A673 (cell line): ENCODE measurements at regions of chr2 and their contacts with region 1.

Region 1: DNA sequence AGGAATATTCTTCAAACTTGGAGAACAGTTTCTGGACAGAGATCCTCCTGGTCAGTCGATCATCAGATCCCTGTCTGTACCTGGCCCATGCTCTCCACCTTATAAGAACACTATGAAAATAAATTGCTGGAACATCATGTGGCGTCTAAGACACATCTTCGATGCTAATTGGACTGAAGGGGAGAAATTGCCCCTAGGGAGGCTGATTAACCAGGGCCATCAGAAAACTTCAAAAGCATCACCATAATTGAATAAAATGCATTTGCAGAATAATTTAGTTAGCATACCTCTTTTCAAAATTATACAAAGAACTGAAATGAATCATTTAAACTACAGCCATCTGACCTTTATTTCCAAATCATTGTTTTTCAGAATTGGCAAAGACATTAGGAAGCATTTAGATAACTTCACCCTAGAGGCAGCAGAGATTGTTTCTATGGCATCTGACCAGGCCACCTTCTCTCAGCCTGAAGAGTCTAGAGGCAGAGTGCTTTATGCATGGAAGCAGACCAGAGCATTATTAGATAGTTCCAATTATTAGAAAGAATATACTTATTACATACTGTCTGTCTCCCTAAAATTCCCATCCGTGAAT is 48.9 kb upstream of the CNTNAP5 start:
- DNase-seq: no peak
- H3K4me3 ChIP-seq: no peak overlapping the region
- H3K27ac ChIP-seq: no peak overlapping the region
- H3K4me1 ChIP-seq: no peaks in the 10 kb centered on the region
- H3K27me3 ChIP-seq: no peaks in the 10 kb centered on the region
- CTCF ChIP-seq: no peak

Region 2: GRCh38 chr2:125254010-125254409 is 1277.9 kb after region 1 on chr2:
- CTCF ChIA-PET with region 1: interaction called, 11 read pairs
- POLR2A ChIA-PET with region 1: no interaction called
- intact Hi-C with region 1: no loop called
- DNase-seq: no peak
- H3K4me3 ChIP-seq: no peak overlapping the region
- H3K27ac ChIP-seq: no peak overlapping the region
- H3K4me1 ChIP-seq: no peaks in the 10 kb centered on the region
- H3K27me3 ChIP-seq: no peaks in the 10 kb centered on the region
- CTCF ChIP-seq: no peak

Region 3: DNA sequence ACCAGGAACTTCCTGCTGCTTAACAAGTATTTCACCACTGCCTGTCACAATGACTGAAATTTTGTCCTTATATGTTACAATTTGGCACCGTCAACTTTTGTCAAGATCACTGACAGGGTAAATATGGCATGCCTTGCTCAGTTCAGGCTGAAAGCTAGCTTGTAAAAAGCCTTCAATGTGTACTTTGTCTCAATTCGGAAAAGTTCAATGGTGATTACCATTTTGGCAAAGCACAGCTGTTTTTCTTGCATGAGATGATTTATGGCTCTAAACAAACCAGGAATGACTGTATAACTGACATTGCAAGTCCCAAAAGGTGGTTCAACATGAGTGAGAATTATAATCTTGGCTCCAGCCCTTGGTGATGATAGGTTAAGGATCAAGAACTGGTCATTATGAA is 1304.1 kb after region 1 on chr2:
- CTCF ChIA-PET with region 1: no interaction called
- POLR2A ChIA-PET with region 1: no interaction called
- intact Hi-C with region 1: no loop called
- DNase-seq: no peak
- H3K4me3 ChIP-seq: no peak overlapping the region
- H3K27ac ChIP-seq: no peak overlapping the region
- H3K4me1 ChIP-seq: no peaks in the 10 kb centered on the region
- H3K27me3 ChIP-seq: no peaks in the 10 kb centered on the region
- CTCF ChIP-seq: no peak